ENCODE measurements at regions of chr7 and their contacts with region 1.

Region 1: DNA sequence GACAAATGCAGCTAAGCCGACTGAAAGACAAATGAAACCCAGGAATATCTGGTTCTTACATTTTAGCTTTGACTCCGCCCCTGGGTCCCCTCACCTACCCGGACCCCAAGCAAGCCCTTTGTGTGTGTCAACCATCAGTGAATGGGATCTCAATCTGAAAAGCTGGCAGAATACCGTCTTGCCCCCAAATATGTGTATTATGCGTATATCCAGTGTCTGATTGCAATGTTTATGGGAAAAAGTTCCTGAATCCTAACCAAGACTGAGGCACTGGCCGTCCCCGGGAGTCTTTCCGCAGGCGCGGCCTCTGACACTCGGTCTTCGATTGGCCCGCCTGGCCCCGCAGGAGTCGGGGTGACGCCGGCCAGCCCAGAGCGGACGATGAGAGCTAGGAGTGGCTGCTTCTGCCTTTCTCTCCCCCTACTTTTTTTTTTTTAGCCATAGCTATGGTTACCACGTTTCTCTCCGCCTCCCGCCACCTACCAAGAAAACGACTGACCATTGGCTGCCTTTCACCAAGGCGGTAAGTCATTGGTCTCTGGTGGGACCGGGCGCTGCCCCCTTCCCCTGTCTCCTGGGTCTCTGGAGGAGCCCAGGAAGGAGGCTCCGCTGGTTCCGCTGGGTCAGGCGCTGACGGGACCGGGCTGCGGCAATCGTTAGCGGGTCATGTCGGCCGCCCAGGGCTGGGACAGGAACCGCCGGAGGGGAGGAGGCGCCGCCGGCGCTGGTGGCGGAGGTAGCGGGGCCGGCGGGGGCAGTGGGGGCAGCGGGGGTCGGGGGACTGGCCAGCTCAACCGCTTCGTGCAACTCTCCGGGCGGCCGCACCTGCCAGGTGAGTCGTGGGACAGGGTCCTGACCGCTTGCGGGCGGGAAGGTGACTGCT is at the start of gene KLHDC10:
- DNase-seq: peak; percentile 97 to 99 (median 99)
- ATAC-seq: peak; percentile 97
- H3K4me3 ChIP-seq: peak within 1 kb of the TSS; percentile 76 to 99
- H3K27ac ChIP-seq: peak within 1 kb of the TSS; percentile 85 to 93
- H3K4me1 ChIP-seq: peaks cover 9 to 44% of the 10 kb centered on the region in 2 donors
- H3K27me3 ChIP-seq: no peaks in the 10 kb centered on the region
- CTCF ChIP-seq: no peak
- polyA plus RNA-seq, gene KLHDC10: 35.7 to 39.7 (median 38.5) TPM

Region 2: DNA sequence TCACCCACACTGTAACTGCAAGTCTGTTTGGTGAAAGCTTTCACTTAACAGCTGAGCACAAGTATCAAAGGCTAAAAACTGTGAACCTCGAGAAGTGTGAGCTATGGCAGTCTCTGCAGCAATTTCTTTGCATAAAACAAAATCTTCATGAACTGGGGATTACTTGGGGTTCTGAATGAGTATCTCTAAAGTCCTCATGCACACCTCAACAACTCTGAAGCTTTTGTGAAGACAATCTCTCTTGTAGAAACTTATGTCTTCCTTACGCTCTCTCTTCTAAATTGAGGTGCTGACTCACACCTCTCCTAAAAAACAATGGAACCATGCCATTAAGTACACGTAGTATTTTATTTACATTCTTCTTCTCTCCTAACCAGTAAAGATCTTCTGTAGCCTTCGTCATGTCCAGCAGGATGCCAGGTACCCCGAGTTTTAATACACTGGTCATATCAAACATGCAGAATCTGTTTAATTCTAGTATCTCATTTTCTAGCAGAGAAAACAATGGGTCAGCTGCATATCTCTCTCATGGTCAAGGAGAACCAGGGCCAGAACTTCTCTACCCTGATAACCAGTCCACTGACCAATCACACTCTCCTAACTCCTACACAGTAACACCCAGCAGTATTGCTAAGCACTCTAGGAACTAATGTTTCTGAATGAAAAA is 194.3 kb before region 1 on chr7:
- intact Hi-C with region 1: no loop called
- DNase-seq: no peak
- ATAC-seq: peak; percentile 62
- H3K4me3 ChIP-seq: no peak overlapping the region
- H3K27ac ChIP-seq: no peak overlapping the region
- H3K4me1 ChIP-seq: peaks cover 5 to 39% of the 10 kb centered on the region in 2 donors
- H3K27me3 ChIP-seq: no peaks in the 10 kb centered on the region
- CTCF ChIP-seq: no peak

Region 3: GRCh38 chr7:130721486-130722280 is 651.5 kb after region 1 on chr7:
- intact Hi-C with region 1: loop called in 1 of 2 experiments (anchors 10 kb)
- DNase-seq: peak in 3 of 4 donors; percentile 58 to 92 (median 72)
- ATAC-seq: peak; percentile 96
- H3K4me3 ChIP-seq: no peak overlapping the region
- H3K27ac ChIP-seq: no peak overlapping the region
- H3K4me1 ChIP-seq: no peaks in the 10 kb centered on the region
- H3K27me3 ChIP-seq: peaks cover 0 to 33% of the 10 kb centered on the region in 2 donors
- CTCF ChIP-seq: peak; percentile 32 to 45